ENCODE measurements at regions of chr9 and their contacts with region 1.

Region 1: GRCh38 chr9:132798817-132799790 is 79.0 kb downstream of the AK8 start:
- DNase-seq: no peak
- H3K4me3 ChIP-seq: no peak overlapping the region
- H3K27ac ChIP-seq: no peak overlapping the region
- H3K4me1 ChIP-seq: no peaks in the 10 kb centered on the region
- H3K27me3 ChIP-seq: peaks cover 33% of the 10 kb centered on the region

Region 2: GRCh38 chr9:132507746-132508469 is 291.2 kb before region 1 on chr9:
- in situ Hi-C with region 1: loop called (anchors 10 kb)
- DNase-seq: peak; percentile 75
- H3K4me3 ChIP-seq: no peak overlapping the region
- H3K27ac ChIP-seq: no peak overlapping the region
- H3K4me1 ChIP-seq: no peaks in the 10 kb centered on the region
- H3K27me3 ChIP-seq: peaks cover 43% of the 10 kb centered on the region

Region 3: DNA sequence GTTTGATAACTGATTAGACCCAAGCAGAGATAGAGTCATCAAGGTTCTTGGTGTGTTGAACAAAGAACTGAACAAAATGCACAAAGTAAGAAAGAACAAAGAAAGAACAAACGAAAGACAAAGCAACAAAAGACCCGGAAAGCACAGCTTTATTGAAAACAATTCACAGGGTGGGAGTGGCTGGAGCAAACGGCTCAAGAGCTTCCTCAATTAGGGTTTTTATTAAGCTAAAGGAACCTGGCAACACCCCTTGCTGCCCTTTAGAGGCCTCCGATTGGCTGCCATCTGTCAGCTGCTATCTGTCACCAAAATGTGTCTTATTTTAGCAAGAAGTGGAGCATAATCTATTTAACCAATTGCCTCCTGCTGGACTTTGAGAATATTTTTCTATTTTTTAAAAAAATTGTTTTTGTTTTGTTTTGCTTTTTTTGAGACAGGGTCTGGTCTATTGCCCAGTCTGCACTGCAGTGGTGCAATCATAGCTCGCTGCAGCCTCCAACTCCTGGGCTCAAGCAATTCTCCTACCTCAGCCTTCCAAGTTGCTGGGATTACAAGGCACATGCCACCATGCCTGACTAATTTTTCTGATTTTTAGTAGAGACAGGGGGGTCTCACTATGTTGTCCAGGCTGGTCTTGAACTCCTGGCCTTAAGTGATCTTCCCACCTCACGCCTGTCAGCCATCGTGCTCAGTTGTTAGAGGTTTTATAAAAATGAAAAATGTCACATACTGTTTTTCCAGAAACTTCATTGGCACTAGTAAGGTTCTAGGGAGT is 483.5 kb after region 1 on chr9:
- in situ Hi-C with region 1: no loop called
- DNase-seq: no peak
- H3K4me3 ChIP-seq: no peak overlapping the region
- H3K27ac ChIP-seq: no peak overlapping the region
- H3K4me1 ChIP-seq: no peaks in the 10 kb centered on the region
- H3K27me3 ChIP-seq: peaks cover 46% of the 10 kb centered on the region